ENCODE measurements at regions of chr11 and their contacts with region 1.

Region 1: GRCh38 chr11:57667736-57668435 is at the start of gene ZDHHC5:
- DNase-seq: peak; percentile 100
- H3K4me3 ChIP-seq: peak within 1 kb of the TSS; percentile 67 to 95 (median 77)
- H3K27ac ChIP-seq: peak within 1 kb of the TSS; percentile 98
- H3K4me1 ChIP-seq: peaks cover 15% of the 10 kb centered on the region
- H3K27me3 ChIP-seq: no peaks in the 10 kb centered on the region
- CTCF ChIP-seq: peak; percentile 53 to 56
- POLR2A ChIP-seq: peak; percentile 93
- total RNA-seq, gene ZDHHC5: 67.4 and 74.0 TPM in 2 replicates

Region 2: DNA sequence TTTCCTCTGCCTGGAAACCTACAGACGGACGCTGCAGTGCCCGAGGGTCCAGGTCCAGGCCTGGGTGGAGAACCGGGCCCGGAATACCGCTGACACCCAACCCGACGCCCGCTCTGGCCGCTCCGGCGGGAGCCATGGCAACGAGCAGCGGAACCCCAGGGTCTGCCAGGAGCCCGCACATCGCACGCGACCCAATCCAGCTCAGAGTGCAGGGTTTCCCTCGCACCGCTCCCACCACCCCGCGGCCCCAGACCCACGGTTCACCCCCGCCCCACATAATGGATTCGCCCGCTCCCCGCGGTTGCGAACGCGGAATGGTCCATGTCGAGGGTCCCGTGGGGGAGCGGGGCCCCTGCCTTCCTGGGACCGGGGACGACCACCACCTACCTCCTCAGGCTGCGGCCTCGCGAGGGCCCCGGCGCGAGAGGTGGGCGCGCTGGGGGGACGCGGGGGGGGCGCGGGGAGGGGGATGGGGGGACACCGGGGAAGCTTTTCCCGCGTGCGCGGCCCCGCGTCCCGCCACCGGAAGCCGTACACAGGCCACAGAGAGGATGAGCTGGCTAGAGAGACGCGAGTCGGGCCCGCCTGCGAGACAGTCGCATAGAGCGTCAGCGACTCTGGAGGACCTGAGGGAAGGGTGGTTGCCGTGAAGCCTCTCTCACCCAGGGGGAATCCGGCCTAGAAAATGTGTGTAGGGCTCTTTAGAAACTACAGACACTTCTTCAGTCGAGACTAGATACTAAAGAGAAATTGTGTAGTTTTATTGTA is 332.4 kb before region 1 on chr11 and contains the start of gene SSRP1:
- CTCF ChIA-PET with region 1: no interaction called
- POLR2A ChIA-PET with region 1: no interaction called
- dilution Hi-C with region 1: no loop called
- intact Hi-C with region 1: loop called (anchors 5 kb)
- DNase-seq: peak; percentile 77
- H3K4me3 ChIP-seq: peak within 1 kb of the TSS; percentile 58 to 82 (median 61)
- H3K27ac ChIP-seq: peak within 1 kb of the TSS; percentile 54
- H3K4me1 ChIP-seq: peaks cover 17% of the 10 kb centered on the region
- H3K27me3 ChIP-seq: peaks cover 4 to 9% of the 10 kb centered on the region in 2 experiments
- CTCF ChIP-seq: no peak
- POLR2A ChIP-seq: peak; percentile 82
- total RNA-seq, gene SSRP1: 140 and 146 TPM in 2 replicates

Region 3: GRCh38 chr11:57574061-57574460 is 93.8 kb before region 1 on chr11:
- CTCF ChIA-PET with region 1: no interaction called
- POLR2A ChIA-PET with region 1: no interaction called
- dilution Hi-C with region 1: no loop called
- intact Hi-C with region 1: no loop called
- DNase-seq: no peak
- H3K4me3 ChIP-seq: no peak overlapping the region
- H3K27ac ChIP-seq: no peak overlapping the region
- H3K4me1 ChIP-seq: no peaks in the 10 kb centered on the region
- H3K27me3 ChIP-seq: peaks cover 4 to 5% of the 10 kb centered on the region in 2 experiments
- CTCF ChIP-seq: no peak
- POLR2A ChIP-seq: no peak

Region 4: GRCh38 chr11:57638005-57638781 is 29.7 kb before region 1 on chr11:
- CTCF ChIA-PET with region 1: no interaction called
- POLR2A ChIA-PET with region 1: no interaction called
- dilution Hi-C with region 1: no loop called
- intact Hi-C with region 1: loop called (anchors 1 kb)
- DNase-seq: peak; percentile 80
- H3K4me3 ChIP-seq: peak overlapping the region; percentile 55 to 87 (median 74)
- H3K27ac ChIP-seq: peak overlapping the region; percentile 81
- H3K4me1 ChIP-seq: peaks cover 24% of the 10 kb centered on the region
- H3K27me3 ChIP-seq: peaks cover 2 to 7% of the 10 kb centered on the region in 2 experiments
- CTCF ChIP-seq: no peak
- POLR2A ChIP-seq: peak; percentile 82

Region 5: DNA sequence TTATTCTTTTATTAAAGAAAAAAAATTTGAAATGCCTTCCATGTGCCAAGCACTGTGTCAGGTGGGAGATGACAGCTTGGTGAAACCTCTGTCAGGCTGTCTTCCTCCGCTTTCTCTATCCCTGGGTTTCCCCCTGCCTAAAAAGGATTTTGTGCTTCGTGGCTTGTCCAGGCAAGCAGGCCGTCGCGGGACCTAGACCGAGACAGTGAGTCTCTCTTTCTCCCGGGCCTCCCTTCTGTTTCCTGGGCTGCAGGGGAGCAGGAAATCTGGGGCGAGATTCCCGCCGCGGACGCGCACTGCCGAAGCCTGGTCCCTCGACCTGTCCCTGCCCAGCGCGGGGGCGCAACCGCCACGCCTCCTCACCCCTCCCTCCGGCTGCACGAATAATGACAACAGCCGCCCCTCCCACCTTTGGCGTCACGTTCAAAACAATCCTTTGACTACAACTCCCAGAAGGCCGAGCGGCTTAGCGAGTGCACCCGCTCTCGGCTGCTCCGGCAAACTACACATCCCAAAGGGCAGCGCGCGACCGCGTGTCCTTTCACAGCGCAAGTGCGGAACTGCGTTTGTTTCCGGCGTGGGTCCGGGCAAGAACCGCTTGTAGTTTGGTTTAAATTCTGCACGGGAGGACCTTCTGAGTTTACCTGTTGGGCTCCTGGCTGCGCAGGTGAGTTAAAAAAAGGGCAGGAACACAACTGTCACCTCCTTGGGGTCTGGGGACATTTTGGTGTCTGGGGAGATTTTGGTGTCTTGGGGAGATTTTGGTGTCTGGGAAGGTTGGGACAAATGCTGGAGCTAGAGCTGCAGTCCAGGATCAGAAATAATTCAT is 10.5 kb before region 1 on chr11 and contains the start of gene CLP1:
- CTCF ChIA-PET with region 1: interaction called, 3 read pairs
- POLR2A ChIA-PET with region 1: no interaction called
- dilution Hi-C with region 1: no loop called
- intact Hi-C with region 1: loop called (anchors 1 kb)
- DNase-seq: peak; percentile 99
- H3K4me3 ChIP-seq: peak within 1 kb of the TSS; percentile 59 to 98 (median 90)
- H3K27ac ChIP-seq: peak within 1 kb of the TSS; percentile 75
- H3K4me1 ChIP-seq: peaks cover 4% of the 10 kb centered on the region
- H3K27me3 ChIP-seq: no peaks in the 10 kb centered on the region
- CTCF ChIP-seq: no peak
- POLR2A ChIP-seq: peak; percentile 70
- total RNA-seq, gene CLP1: 17.9 and 20.9 TPM in 2 replicates

Region 6: DNA sequence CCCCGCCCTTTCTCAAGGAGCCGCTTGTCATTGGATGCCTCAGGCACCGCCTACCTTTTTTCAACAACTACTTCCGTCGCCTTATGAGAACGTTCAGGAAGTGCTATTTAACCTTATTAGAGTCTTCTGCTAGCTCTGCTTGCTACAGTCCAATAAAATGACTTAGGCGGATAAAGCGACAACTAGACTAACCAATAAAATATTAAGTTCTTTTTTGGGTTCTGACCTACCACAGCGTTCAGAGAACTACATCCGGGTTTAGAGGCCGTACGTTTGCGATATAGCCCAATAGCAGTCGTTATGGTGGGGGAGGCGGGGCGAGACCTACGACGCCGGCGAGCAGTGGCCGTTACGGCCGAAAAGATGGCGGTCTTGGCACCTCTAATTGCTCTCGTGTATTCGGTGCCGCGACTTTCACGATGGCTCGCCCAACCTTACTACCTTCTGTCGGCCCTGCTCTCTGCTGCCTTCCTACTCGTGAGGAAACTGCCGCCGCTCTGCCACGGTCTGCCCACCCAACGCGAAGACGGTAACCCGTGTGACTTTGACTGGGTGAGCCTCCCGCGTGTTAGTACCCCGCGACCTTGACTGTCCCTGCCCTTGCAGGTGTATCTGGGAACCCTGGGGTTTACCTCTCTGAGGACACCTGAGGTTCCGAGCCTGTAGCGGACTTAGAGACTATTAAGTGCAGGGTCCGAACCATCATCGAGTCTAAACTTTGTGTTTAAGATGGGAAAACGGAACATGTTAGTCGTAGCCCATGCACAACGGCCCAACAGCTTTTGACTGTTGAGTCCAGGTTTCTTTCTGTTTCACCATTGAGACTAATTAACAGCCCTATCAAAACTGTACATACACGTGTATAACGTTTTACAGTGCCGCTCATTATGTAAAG is 44.6 kb after region 1 on chr11 and contains the start of gene TMX2:
- CTCF ChIA-PET with region 1: no interaction called
- POLR2A ChIA-PET with region 1: no interaction called
- dilution Hi-C with region 1: no loop called
- intact Hi-C with region 1: loop called (anchors 1 kb)
- DNase-seq: peak; percentile 99
- H3K4me3 ChIP-seq: peak within 1 kb of the TSS; percentile 64 to 100 (median 78)
- H3K27ac ChIP-seq: peak within 1 kb of the TSS; percentile 67
- H3K4me1 ChIP-seq: peaks cover 18% of the 10 kb centered on the region
- H3K27me3 ChIP-seq: no peaks in the 10 kb centered on the region
- CTCF ChIP-seq: no peak
- POLR2A ChIP-seq: no peak
- total RNA-seq, gene TMX2: 66.3 and 67.7 TPM in 2 replicates

Region 7: DNA sequence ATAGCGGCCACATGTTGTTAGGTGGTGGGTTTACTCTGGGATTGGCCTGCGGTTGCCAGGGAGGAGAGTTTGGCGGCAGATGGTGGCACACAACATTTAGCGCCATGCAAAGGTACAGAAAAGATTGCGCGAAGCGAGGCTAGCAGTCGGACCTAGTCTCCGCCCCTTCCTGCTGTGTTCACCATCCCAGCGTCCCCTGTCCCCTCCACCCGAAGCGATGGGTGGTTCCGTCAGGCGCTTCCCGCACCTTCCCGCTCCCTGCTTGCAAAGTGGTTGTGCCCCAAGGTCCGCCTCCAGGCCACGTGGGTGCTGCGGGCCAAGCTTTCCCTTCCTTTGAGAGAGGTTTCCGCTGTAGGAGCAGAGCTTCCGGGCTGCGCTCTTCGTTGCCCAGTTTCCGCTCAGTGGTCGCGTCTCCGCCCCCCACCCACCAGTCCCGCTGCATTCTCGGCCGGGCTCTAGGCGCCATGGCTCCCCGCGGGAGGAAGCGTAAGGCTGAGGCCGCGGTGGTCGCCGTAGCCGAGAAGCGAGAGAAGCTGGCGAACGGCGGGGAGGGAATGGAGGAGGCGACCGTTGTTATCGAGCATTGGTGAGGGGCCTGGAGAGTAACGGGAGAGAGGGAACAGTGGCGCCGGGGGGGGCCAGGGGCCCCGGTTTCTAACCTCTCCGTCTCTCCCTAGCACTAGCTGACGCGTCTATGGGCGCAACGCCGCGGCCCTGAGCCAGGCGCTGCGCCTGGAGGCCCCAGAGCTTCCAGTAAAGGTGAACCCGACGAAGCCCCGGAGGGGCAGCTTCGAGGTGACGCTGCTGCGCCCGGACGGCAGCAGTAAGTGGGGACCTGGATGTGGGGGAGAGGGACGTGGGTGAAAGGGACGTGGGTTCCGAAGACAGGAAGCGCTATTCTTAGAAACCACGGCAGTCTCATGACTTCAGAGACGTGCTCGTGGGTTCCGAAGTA is 73.5 kb after region 1 on chr11 and contains the start of gene SELENOH:
- CTCF ChIA-PET with region 1: no interaction called
- POLR2A ChIA-PET with region 1: no interaction called
- dilution Hi-C with region 1: no loop called
- intact Hi-C with region 1: loop called (anchors 1 kb)
- DNase-seq: peak; percentile 98
- H3K4me3 ChIP-seq: peak within 1 kb of the TSS; percentile 55 to 94 (median 75)
- H3K27ac ChIP-seq: peak within 1 kb of the TSS; percentile 71
- H3K4me1 ChIP-seq: peaks cover 11% of the 10 kb centered on the region
- H3K27me3 ChIP-seq: no peaks in the 10 kb centered on the region
- CTCF ChIP-seq: no peak
- POLR2A ChIP-seq: peak; percentile 95
- total RNA-seq, gene SELENOH: 161 and 167 TPM in 2 replicates

Region 8: DNA sequence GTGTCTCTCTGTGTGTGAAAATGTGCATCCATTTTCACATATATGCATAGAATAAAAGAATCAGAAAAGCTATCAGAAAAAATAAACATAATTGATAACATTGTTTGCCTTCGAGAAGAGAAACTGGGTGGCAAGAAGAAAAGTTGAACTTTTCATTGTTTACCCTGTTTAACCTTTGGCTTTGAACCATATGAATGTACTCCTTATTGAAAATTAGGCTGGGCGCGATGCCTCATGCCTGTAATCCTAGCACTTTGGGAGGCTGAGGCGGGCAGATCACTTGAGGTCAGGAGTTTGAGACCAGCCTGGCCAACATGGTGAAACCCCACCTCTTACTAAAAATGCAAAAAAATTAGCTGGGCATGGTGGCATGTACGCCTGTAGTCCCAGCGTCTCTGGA is 343.9 kb after region 1 on chr11:
- CTCF ChIA-PET with region 1: no interaction called
- POLR2A ChIA-PET with region 1: no interaction called
- dilution Hi-C with region 1: no loop called
- intact Hi-C with region 1: no loop called
- DNase-seq: no peak
- H3K4me3 ChIP-seq: no peak overlapping the region
- H3K27ac ChIP-seq: no peak overlapping the region
- H3K4me1 ChIP-seq: peaks cover 4% of the 10 kb centered on the region
- H3K27me3 ChIP-seq: no peaks in the 10 kb centered on the region
- CTCF ChIP-seq: no peak
- POLR2A ChIP-seq: no peak

Region 9: DNA sequence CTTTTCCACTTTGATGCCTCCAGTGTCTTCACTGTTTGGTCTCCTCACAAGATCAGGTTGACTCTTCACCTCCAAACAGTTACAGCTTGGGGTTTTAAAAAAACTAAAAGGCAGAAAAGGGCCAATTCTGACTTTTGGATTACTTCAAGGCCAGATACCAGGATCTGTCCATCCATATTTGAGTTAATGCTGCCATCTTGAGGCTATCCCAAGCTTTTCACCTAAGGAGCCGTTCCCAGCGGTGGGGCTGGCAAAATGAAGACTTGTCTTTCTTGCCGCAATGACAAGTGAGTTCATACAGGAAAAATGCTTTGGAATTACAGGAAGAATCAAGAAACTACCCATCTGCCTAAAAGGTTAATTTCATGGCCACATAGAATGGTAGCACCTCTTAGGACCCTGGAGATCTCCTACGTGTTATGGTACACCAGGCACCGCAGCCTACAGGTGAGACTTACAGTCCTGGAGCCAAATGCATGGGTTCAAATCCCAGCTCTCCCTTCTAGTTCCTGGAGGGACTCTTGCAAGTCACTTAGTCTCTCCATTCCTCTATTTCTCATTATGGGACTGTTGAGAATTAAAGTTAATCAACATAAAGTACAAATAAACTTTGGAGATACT is 846.0 kb after region 1 on chr11:
- CTCF ChIA-PET with region 1: interaction called, 3 read pairs
- POLR2A ChIA-PET with region 1: no interaction called
- dilution Hi-C with region 1: no loop called
- intact Hi-C with region 1: loop called (anchors 10 kb)
- DNase-seq: peak; percentile 73
- H3K4me3 ChIP-seq: no peak overlapping the region
- H3K27ac ChIP-seq: no peak overlapping the region
- H3K4me1 ChIP-seq: no peaks in the 10 kb centered on the region
- H3K27me3 ChIP-seq: peaks cover 18 to 32% of the 10 kb centered on the region in 2 experiments
- CTCF ChIP-seq: peak; percentile 57 to 68
- POLR2A ChIP-seq: no peak